ENCODE measurements at regions of chr4 and their contacts with region 1.

Region 1: DNA sequence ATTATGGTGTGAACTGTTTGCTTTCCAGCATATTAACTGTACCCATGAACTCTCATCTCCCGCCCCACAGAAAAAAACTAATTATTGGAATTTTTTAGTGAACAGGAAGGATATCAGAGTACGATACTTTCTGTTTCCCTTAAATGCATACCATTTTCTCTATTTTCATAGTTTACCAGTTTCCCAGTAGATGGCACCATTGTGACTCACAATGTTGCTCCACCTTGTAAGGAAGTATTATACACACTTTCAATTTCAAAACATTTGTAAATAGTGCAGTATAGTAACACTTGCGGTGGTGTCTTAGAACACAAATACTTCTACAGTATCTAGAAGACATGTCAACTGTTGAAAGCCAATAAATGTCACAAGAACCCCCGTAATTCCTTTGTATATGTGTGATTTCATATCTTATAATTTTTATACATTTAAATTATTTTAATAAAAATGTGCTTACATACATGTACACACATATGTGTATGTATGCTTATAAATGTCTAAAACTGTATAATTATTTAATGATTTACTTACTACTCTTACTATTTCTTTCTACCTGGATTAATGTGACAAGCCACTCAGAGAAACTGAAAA is 167.3 kb downstream of the SLIT2 start:
- DNase-seq: peak; percentile 11
- H3K4me3 Mint-ChIP-seq: peak overlapping the region; percentile 20
- H3K27ac Mint-ChIP-seq: no peak overlapping the region
- H3K4me1 Mint-ChIP-seq: peaks cover 4% of the 10 kb centered on the region
- H3K27me3 Mint-ChIP-seq: no peaks in the 10 kb centered on the region

Region 2: DNA sequence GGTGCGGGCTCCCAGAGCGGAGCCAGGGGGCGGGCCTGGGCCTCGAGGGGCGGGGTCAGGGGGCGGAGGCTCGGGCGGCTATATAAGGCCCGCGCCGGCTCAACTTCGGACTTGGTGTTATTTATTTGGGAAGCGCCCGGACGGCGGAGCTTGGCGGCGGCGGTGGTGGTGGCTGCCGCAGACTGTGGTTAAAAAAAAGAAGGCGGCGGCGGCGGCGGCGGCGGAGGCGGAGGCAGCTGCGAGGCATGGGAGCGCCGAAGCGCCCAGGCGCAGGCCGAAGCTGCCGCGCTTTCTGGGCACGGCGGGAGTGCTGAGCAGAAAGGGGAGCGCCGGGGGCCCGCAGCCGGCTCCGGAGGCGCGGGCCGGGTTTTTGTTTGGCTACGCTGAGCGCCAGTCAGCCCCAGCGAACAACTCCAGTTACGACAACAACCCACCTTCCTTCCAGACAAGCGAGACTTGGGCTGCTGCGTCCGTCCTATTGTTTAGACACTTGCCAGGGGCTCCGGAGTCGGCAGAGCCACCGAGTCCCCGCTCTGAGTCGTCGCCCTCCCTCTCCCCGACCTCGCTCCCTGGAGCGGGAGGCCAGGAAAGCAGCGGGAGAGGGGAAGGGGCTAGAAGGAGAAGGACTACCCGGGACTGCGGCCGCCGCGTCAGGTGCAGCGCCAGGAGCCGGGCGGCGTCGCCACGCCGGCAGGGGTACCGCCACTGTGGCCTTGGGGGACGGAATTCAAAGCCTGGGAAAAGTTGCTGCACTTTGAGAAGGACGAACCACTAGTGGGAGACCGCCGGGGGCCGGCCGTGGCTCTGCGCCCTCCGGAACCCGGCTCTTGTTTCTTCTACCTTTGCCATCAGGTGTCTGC is 166.9 kb before region 1 on chr4 and contains the start of gene SLIT2:
- CTCF ChIA-PET with region 1: no interaction called
- intact Hi-C with region 1: loop called (anchors 5 kb)
- DNase-seq: peak; percentile 4
- H3K4me3 Mint-ChIP-seq: peak within 1 kb of the TSS; percentile 34
- H3K27ac Mint-ChIP-seq: no peak within 1 kb of the TSS
- H3K4me1 Mint-ChIP-seq: peaks cover 13% of the 10 kb centered on the region
- H3K27me3 Mint-ChIP-seq: peaks cover 46% of the 10 kb centered on the region
- total RNA-seq, gene SLIT2: not detected

Region 3: GRCh38 chr4:20395160-20395773 is 23.7 kb before region 1 on chr4:
- CTCF ChIA-PET with region 1: no interaction called
- intact Hi-C with region 1: loop called (anchors 2 kb)
- DNase-seq: peak; percentile 46
- H3K4me3 Mint-ChIP-seq: no peak overlapping the region
- H3K27ac Mint-ChIP-seq: no peak overlapping the region
- H3K4me1 Mint-ChIP-seq: no peaks in the 10 kb centered on the region
- H3K27me3 Mint-ChIP-seq: peaks cover 7% of the 10 kb centered on the region

Region 4: GRCh38 chr4:20544645-20545044 is 125.7 kb after region 1 on chr4:
- CTCF ChIA-PET with region 1: no interaction called
- intact Hi-C with region 1: loop called (anchors 1 kb)
- DNase-seq: no peak
- H3K4me3 Mint-ChIP-seq: no peak overlapping the region
- H3K27ac Mint-ChIP-seq: no peak overlapping the region
- H3K4me1 Mint-ChIP-seq: no peaks in the 10 kb centered on the region
- H3K27me3 Mint-ChIP-seq: no peaks in the 10 kb centered on the region

Region 5: DNA sequence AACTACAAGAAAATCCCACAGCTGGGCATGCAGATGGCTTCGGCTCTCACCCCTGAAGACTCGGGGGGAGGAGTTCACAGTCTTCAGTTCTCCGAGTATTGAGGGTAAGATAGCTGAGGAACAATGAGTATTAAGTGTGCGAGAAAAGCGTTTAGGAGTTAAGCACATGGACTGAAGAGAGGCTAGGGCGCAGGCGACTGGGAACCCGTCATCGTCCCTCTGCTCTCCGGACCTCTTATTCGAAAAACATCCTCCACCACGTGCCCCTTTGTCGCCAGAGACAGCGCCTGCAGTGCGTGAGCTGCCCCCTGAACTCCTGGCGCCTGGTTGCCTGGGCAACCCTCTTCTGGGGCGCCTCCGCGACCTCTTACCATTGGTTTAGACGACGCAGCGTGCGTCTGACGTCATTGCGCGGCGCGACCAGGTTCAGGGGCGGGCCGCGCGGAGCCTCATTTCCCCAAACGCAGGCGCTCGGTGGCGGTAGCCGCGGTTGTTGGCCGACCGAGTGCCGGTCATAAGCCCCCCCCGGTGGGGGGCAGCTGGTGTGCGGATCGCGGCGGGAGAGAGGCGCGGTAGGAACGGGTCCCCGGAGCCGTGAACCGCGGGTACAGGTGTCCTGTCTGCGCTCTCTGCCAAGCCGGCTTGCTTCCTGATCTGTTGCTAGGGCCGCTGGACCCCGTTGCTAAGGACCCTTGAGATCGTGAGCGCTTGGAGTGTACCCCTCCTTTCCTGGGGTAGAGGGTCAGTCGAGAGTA is 281.2 kb after region 1 on chr4 and contains the start of gene PACRGL:
- CTCF ChIA-PET with region 1: interaction called, 3 read pairs
- intact Hi-C with region 1: loop called (anchors 1 kb)
- DNase-seq: peak; percentile 93
- H3K4me3 Mint-ChIP-seq: peak within 1 kb of the TSS; percentile 89
- H3K27ac Mint-ChIP-seq: peak within 1 kb of the TSS; percentile 85
- H3K4me1 Mint-ChIP-seq: peaks cover 30% of the 10 kb centered on the region
- H3K27me3 Mint-ChIP-seq: no peaks in the 10 kb centered on the region
- total RNA-seq, gene PACRGL: 13.0 to 13.1 TPM

Region 6: DNA sequence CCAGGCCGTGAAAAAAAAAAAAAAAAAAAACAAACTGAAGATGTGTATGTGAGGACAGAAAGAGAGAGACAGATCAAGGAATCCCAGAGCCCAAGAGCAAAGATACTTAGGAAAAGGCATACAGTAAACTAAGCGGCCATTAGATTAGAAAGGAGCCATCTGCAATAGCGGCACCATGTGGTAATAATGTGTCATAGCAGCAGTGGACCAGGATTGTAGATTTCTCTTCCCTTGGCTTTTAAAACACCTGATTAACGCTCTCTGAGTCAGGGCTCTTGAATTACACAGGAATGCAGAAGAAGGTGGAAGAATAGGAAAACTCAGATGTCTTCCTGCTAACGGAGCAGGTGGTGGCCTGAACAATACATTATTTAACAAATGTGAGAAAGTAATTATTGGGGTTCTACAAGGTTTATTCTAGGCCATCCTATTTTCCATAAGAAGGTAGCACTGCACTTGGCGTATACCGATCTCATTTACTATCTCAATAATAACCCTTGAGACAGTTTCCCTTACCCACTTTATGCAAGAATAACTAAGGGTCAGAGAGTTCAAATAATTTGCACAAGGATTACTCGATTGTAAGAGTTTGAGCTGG is 1347.0 kb after region 1 on chr4:
- CTCF ChIA-PET with region 1: no interaction called
- intact Hi-C with region 1: loop called (anchors 1 kb)
- DNase-seq: peak; percentile 56
- H3K4me3 Mint-ChIP-seq: no peak overlapping the region
- H3K27ac Mint-ChIP-seq: peak overlapping the region; percentile 59
- H3K4me1 Mint-ChIP-seq: peaks cover 4% of the 10 kb centered on the region
- H3K27me3 Mint-ChIP-seq: peaks cover 7% of the 10 kb centered on the region

Measured in activated naive CD4-positive, alpha-beta T cell treated with anti-CD3 and anti-CD28 coated beads for 36 hours (primary cell).